GM23248 (cell line): ENCODE measurements at regions of chr11 and their contacts with region 1.

Region 1: GRCh38 chr11:2151500-2152257 is 9.3 kb downstream of the INS start:
- DNase-seq: peak; percentile 77
- H3K4me3 ChIP-seq: no peak overlapping the region
- H3K27ac ChIP-seq: no peak overlapping the region
- H3K4me1 ChIP-seq: no peaks in the 10 kb centered on the region
- H3K27me3 ChIP-seq: peaks cover 40% of the 10 kb centered on the region

Region 2: GRCh38 chr11:1706634-1707400 is 444.9 kb before region 1 on chr11:
- in situ Hi-C with region 1: loop called (anchors 25 kb)
- DNase-seq: peak; percentile 17
- H3K4me3 ChIP-seq: no peak overlapping the region
- H3K27ac ChIP-seq: no peak overlapping the region
- H3K4me1 ChIP-seq: no peaks in the 10 kb centered on the region
- H3K27me3 ChIP-seq: peaks cover 82% of the 10 kb centered on the region

Region 3: GRCh38 chr11:1863352-1864216 is 288.1 kb before region 1 on chr11:
- in situ Hi-C with region 1: loop called (anchors 25 kb)
- DNase-seq: peak; percentile 89
- H3K4me3 ChIP-seq: no peak overlapping the region
- H3K27ac ChIP-seq: peak overlapping the region; percentile 23; the same call in 1 of the 2 replicates
- H3K4me1 ChIP-seq: peaks cover 15% of the 10 kb centered on the region
- H3K27me3 ChIP-seq: peaks cover 9% of the 10 kb centered on the region; the same call in 1 of the 2 replicates

Region 4: DNA sequence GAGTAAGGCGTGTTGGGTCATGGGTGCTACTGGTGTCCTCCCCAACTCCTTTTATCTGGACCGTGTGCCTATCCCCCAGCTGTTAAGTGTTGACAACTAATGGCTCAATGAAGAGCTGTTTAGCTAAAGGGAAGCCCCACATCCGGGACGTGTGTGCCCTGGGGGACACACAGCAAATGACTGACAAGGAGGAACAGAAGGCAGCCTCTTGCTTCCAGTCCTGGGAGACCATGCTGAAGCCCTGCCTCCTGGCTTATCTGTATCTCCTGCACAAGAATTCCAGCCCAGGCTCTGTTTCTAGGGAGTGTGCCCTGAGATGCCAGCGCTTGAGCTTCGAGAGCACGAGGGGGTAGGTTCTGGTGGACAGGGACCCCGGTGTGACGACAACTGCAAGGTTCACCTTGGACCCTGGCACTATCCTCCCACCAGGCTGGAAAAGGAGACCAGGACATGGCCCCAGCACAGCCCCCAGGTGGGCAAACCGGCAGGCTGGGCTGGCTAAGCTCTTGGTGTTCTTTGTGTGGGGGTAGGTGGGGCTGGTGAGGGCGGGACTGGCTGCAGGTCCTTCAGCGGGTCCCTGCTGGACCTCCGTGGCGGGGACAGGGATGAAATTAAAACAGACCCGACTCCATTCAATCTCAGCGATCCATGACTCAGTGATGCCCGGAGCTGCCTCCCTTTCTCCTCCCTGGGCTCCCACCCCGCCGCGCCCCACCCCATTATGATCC is 97.7 kb after region 1 on chr11:
- in situ Hi-C with region 1: no loop called
- DNase-seq: no peak
- H3K4me3 ChIP-seq: no peak overlapping the region
- H3K27ac ChIP-seq: no peak overlapping the region
- H3K4me1 ChIP-seq: no peaks in the 10 kb centered on the region
- H3K27me3 ChIP-seq: peaks cover 45% of the 10 kb centered on the region